H1 (cell line): ENCODE measurements at regions of chr12 and their contacts with region 1.

Region 1: GRCh38 chr12:69779928-69780327 is 41.3 kb downstream of the RAB3IP start:
- DNase-seq: peak; percentile 54 to 79
- H3K4me3 ChIP-seq: no peak overlapping the region
- H3K27ac ChIP-seq: no peak overlapping the region
- H3K4me1 ChIP-seq: no peaks in the 10 kb centered on the region; a peak in 2 of 7 replicates
- H3K27me3 ChIP-seq: no peaks in the 10 kb centered on the region
- CTCF ChIP-seq: peak; percentile 70 to 87 (median 70)
- EP300 ChIP-seq: no peak
- POLR2A ChIP-seq: no peak
- RAD21 ChIP-seq: peak; percentile 86 to 89

Region 2: GRCh38 chr12:69744109-69744508 is 35.8 kb before region 1 on chr12:
- CTCF ChIA-PET with region 1: interaction called, 11 read pairs
- POLR2A ChIA-PET with region 1: no interaction called
- DNase-seq: no peak
- H3K4me3 ChIP-seq: no peak overlapping the region
- H3K27ac ChIP-seq: no peak overlapping the region
- H3K4me1 ChIP-seq: peaks cover 0 to 2% (median 0%) of the 10 kb centered on the region in 4 experiments; a peak in 1 of 7 replicates
- H3K27me3 ChIP-seq: peaks cover 0 to 3% (median 0%) of the 10 kb centered on the region in 4 experiments; a peak in 3 of 7 replicates
- CTCF ChIP-seq: no peak
- EP300 ChIP-seq: no peak
- POLR2A ChIP-seq: no peak
- RAD21 ChIP-seq: no peak

Region 3: GRCh38 chr12:69766260-69766659 is 13.7 kb before region 1 on chr12:
- CTCF ChIA-PET with region 1: no interaction called
- POLR2A ChIA-PET with region 1: no interaction called
- DNase-seq: no peak
- H3K4me3 ChIP-seq: no peak overlapping the region
- H3K27ac ChIP-seq: no peak overlapping the region
- H3K4me1 ChIP-seq: no peaks in the 10 kb centered on the region
- H3K27me3 ChIP-seq: no peaks in the 10 kb centered on the region
- CTCF ChIP-seq: no peak
- EP300 ChIP-seq: no peak
- POLR2A ChIP-seq: no peak
- RAD21 ChIP-seq: no peak

Region 4: DNA sequence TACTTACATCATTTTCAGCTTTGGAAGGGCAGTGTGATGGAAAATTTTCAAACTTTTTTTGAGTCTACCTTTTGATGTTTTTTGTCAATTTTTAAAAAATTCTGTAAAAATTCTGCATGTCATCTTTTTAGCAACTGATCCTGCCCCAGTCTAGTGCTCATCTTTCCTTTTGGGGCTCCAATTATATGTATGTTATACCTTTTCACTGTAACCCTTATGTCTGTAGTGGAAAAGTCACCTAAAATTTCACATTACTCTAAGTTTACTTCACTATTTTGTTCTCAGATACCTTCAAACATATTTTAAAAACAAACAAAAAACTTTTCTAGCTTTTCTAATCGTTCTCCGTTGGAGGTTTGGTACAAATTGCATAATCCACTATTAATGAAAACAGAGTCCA is 12.6 kb after region 1 on chr12:
- CTCF ChIA-PET with region 1: interaction called, 10 read pairs
- POLR2A ChIA-PET with region 1: interaction called, 5 read pairs
- DNase-seq: no peak
- H3K4me3 ChIP-seq: no peak overlapping the region
- H3K27ac ChIP-seq: no peak overlapping the region
- H3K4me1 ChIP-seq: no peaks in the 10 kb centered on the region
- H3K27me3 ChIP-seq: peaks cover 0 to 1% (median 0%) of the 10 kb centered on the region in 4 experiments; a peak in 1 of 7 replicates
- CTCF ChIP-seq: no peak
- EP300 ChIP-seq: no peak
- POLR2A ChIP-seq: no peak
- RAD21 ChIP-seq: no peak

Region 5: GRCh38 chr12:69916544-69917235 is 136.8 kb after region 1 on chr12:
- CTCF ChIA-PET with region 1: no interaction called
- POLR2A ChIA-PET with region 1: no interaction called
- DNase-seq: no peak
- H3K4me3 ChIP-seq: no peak overlapping the region
- H3K27ac ChIP-seq: no peak overlapping the region
- H3K4me1 ChIP-seq: no peaks in the 10 kb centered on the region
- H3K27me3 ChIP-seq: no peaks in the 10 kb centered on the region
- CTCF ChIP-seq: no peak
- EP300 ChIP-seq: no peak
- POLR2A ChIP-seq: no peak
- RAD21 ChIP-seq: no peak